CD4-positive, alpha-beta memory T cell (primary cell): ENCODE measurements at regions of chr19 and their contacts with region 1.

Region 1: GRCh38 chr19:57746580-57747471 is at the start of gene ZNF776:
- DNase-seq: peak; percentile 84 to 90 (median 87)
- H3K4me3 ChIP-seq: peak within 1 kb of the TSS; percentile 78 to 87
- H3K4me3 Mint-ChIP-seq: peak within 1 kb of the TSS; percentile 87 to 99 (median 94)
- H3K27ac ChIP-seq: peak within 1 kb of the TSS; percentile 77
- H3K27ac Mint-ChIP-seq: peak within 1 kb of the TSS; percentile 76 to 98 (median 94)
- H3K4me1 ChIP-seq: peaks cover 18% of the 10 kb centered on the region
- H3K4me1 Mint-ChIP-seq: peaks cover 13 to 37% (median 27%) of the 10 kb centered on the region in 4 donors
- H3K27me3 ChIP-seq: no peaks in the 10 kb centered on the region
- H3K27me3 Mint-ChIP-seq: no peaks in the 10 kb centered on the region
- total RNA-seq, gene ZNF776: 38.9 to 40.9 TPM

Region 2: GRCh38 chr19:57682226-57682766 is 64.5 kb before region 1 on chr19:
- CTCF ChIA-PET with region 1: no interaction called
- POLR2A ChIA-PET with region 1: interaction called, 3 read pairs
- intact Hi-C with region 1: loop called (anchors 2 kb)
- DNase-seq: no peak
- H3K4me3 ChIP-seq: peak overlapping the region; percentile 87 to 92
- H3K4me3 Mint-ChIP-seq: peak overlapping the region; percentile 96 to 99 (median 97)
- H3K27ac ChIP-seq: peak overlapping the region; percentile 54
- H3K27ac Mint-ChIP-seq: peak overlapping the region; percentile 91 to 99 (median 97)
- H3K4me1 ChIP-seq: peaks cover 18% of the 10 kb centered on the region
- H3K4me1 Mint-ChIP-seq: peaks cover 21 to 45% (median 38%) of the 10 kb centered on the region in 4 donors
- H3K27me3 ChIP-seq: no peaks in the 10 kb centered on the region
- H3K27me3 Mint-ChIP-seq: no peaks in the 10 kb centered on the region

Region 3: DNA sequence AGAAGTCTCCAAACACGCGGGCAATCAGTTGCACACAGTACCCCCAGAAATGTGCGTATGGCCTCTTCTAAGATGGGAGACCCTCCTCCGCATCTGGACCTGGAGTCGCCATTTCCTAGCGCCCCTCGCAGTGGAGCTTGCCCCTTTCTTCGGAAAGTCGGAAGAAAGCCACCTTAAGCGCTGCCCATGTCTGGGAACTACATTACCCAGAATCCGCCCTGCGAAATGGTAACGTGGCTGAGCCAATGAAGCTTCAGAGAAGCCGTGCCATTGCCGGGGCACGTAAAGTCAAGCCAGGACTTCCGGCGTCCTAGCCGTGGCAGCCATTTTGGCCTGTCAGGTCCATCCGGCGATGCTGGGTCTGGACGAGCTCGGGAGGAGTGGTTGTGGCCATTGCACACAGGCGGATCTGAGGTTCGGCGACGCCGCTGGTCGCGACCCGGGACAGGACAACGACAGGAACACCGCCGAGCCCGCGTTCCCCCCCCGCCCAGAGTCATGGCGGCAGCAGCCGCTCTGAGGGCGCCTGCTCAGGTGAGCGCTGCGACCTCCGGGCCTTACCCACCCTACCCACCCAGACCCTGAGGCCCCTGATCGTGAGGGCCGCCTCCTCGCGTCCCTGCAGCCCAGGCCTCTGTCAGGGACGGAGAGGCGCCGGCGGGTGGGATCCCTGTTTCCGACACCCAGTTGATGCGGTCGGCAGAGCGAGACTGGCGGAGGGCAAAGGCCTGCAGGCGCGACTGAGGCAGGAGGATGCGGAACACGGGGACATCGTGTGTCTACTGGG is 22.7 kb after region 1 on chr19 and contains the start of gene ZNF586:
- CTCF ChIA-PET with region 1: no interaction called
- POLR2A ChIA-PET with region 1: interaction called, 16 read pairs
- intact Hi-C with region 1: loop called (anchors 1 kb)
- DNase-seq: peak; percentile 82 to 91 (median 85)
- H3K4me3 ChIP-seq: peak within 1 kb of the TSS; percentile 62 to 75
- H3K4me3 Mint-ChIP-seq: peak within 1 kb of the TSS; percentile 96 to 99 (median 96)
- H3K27ac ChIP-seq: peak within 1 kb of the TSS; percentile 75
- H3K27ac Mint-ChIP-seq: peak within 1 kb of the TSS; percentile 91 to 98 (median 96)
- H3K4me1 ChIP-seq: peaks cover 20% of the 10 kb centered on the region
- H3K4me1 Mint-ChIP-seq: peaks cover 23 to 51% (median 33%) of the 10 kb centered on the region in 4 donors
- H3K27me3 ChIP-seq: no peaks in the 10 kb centered on the region
- H3K27me3 Mint-ChIP-seq: no peaks in the 10 kb centered on the region
- total RNA-seq, gene ZNF586: 46.4 to 51.7 TPM

Region 4: GRCh38 chr19:57779220-57779845 is 32.5 kb after region 1 on chr19:
- CTCF ChIA-PET with region 1: no interaction called
- POLR2A ChIA-PET with region 1: no interaction called
- intact Hi-C with region 1: loop called (anchors 1 kb)
- DNase-seq: no peak
- H3K4me3 ChIP-seq: no peak overlapping the region
- H3K4me3 Mint-ChIP-seq: peak overlapping the region in 1 of 8 donors; percentile 7
- H3K27ac ChIP-seq: no peak overlapping the region
- H3K27ac Mint-ChIP-seq: no peak overlapping the region
- H3K4me1 ChIP-seq: no peaks in the 10 kb centered on the region
- H3K4me1 Mint-ChIP-seq: peaks cover 0 to 9% (median 4%) of the 10 kb centered on the region in 4 donors
- H3K27me3 ChIP-seq: no peaks in the 10 kb centered on the region
- H3K27me3 Mint-ChIP-seq: no peaks in the 10 kb centered on the region

Region 5: GRCh38 chr19:57819475-57820148 is 72.8 kb after region 1 on chr19:
- CTCF ChIA-PET with region 1: no interaction called
- POLR2A ChIA-PET with region 1: interaction called, 7 read pairs
- intact Hi-C with region 1: loop called (anchors 1 kb)
- DNase-seq: peak; percentile 80 to 91 (median 84)
- H3K4me3 ChIP-seq: peak overlapping the region; percentile 86 to 91
- H3K4me3 Mint-ChIP-seq: peak overlapping the region; percentile 96 to 99 (median 98)
- H3K27ac ChIP-seq: peak overlapping the region; percentile 75
- H3K27ac Mint-ChIP-seq: peak overlapping the region; percentile 93 to 99 (median 99)
- H3K4me1 ChIP-seq: peaks cover 25% of the 10 kb centered on the region
- H3K4me1 Mint-ChIP-seq: peaks cover 45 to 75% (median 55%) of the 10 kb centered on the region in 4 donors
- H3K27me3 ChIP-seq: no peaks in the 10 kb centered on the region
- H3K27me3 Mint-ChIP-seq: no peaks in the 10 kb centered on the region